Posterior vena cava (tissue), 2 donors: ENCODE measurements at regions of chr16 and their contacts with region 1.

Region 1: DNA sequence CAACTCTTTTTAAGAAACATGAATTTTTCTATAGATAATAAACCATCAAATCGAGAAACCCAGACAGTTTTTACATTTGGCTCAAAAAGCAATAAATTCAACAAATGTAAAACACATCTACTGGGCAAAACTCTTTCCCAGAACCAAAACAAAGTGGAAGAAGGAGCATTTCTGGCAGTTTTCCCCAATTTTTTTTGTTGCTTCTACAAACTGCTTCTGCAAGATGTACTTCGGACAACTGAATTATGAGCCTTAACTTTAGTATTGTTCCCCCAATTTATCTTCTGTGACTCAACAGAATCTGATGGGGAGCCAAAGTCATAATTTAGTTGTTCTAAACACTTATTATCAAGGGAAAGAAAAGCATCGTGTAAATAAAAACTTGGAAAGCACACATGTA is 1047.2 kb downstream of the CDH11 start:
- DNase-seq: no peak

Region 2: DNA sequence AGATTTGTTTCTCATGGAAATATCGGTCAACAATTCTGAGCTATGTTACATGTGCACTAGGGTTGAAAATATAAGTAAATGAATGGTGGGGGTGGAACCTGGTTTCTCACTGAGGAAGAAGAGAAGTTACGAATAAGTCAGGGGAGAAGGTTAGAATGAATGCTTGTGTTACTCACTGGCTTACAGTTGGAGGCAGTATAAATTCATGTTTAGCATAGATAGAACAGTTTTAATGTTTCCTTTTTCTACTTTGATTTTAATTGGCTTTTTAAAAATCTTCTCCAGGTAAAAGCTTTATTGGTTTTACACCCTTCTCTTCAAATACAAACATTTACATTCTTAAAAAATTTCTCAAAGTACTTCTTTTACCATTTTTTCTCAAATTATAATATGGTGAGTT is 66.6 kb before region 1 on chr16:
- intact Hi-C with region 1: no loop called
- DNase-seq: no peak

Region 3: DNA sequence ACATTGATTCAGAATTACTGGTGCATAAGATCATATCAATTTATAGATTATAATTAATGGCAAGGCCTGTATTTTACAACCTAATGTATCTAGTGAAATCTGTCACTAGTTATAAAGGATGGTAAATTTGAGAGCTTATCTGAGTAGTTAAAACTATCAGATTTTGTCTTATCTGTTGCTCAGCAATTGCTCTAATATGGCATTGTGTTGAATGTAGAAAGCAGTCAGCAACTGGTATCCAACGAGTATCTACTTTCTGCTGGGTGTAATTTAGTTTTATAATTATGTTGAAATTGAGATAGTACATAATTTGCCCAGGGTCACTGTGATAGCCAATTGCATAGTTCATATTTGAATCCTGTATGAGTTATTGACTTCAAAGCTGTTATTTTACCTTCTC is 41.4 kb after region 1 on chr16:
- intact Hi-C with region 1: no loop called
- DNase-seq: no peak

Region 4: DNA sequence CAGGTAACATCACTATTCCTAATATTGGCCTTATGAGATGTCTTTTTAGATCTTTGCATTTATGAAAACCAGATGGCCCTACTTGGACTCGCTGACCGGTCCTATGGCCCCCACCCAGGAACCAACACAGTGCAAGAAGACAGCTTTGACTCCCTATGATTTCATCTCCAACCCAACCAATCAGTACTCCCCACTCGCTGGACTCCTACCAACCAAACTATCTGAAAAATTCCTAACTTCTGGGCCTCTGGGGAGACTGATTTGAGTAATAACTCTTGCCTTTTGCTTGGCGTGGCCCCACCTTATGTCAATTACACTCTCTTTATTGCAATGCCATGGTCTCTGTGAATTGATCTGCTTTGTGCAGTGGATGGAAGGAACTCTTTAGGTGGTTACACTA is 218.2 kb after region 1 on chr16:
- intact Hi-C with region 1: no loop called
- DNase-seq: no peak

Region 5: GRCh38 chr16:64778777-64779176 is 704.1 kb after region 1 on chr16:
- intact Hi-C with region 1: loop called in 1 of 2 experiments (anchors 5 kb)
- DNase-seq: no peak